Ascending aorta (tissue), 2 donors: ENCODE measurements at regions of chr12 and their contacts with region 1.

Region 1: DNA sequence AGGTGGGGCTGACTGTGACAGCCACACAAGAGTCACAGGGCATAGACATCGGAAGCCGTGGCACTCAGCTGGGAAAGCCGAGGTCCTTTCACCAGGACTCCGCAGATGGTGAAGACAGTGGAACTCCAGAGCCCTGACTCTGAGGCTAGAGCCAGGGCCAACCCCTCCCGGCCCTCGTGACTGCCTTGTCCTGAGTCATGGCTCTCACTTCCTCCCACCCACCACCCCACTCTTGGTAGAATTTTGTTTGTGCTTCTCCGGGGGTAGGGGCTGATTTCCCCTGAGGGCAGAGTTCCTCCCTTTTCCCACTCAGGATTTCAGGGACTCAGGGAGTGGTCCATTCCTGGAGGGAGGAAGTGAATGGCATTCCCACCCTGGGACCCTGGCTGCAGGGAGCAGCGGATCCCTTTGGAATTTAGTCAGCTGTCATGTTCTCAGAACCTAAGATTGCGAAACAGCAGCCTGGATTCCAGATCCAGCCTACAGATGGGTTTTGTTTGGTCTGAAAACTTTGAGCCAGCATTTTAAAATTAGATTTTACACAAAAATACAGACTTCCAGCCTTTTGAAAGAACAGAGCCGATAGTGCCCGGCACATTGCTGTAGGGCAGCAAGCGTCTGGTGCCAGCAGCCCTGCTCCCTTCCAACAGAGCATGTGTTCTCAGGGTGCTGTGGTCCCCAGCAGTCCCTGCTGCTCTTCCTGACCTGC is 50.7 kb downstream of the TPCN1 start:
- DNase-seq: peak; percentile 67 to 93
- H3K4me3 ChIP-seq: peak overlapping the region in 1 of 2 donors; percentile 43
- H3K27ac ChIP-seq: peak overlapping the region; percentile 76 to 78
- H3K4me1 ChIP-seq: peaks cover 19 to 27% of the 10 kb centered on the region in 2 donors
- H3K27me3 ChIP-seq: no peaks in the 10 kb centered on the region
- CTCF ChIP-seq: no peak

Region 2: GRCh38 chr12:112924986-112925385 is 347.0 kb before region 1 on chr12:
- intact Hi-C with region 1: no loop called
- DNase-seq: no peak
- H3K4me3 ChIP-seq: no peak overlapping the region
- H3K27ac ChIP-seq: no peak overlapping the region
- H3K4me1 ChIP-seq: no peaks in the 10 kb centered on the region
- H3K27me3 ChIP-seq: no peaks in the 10 kb centered on the region
- CTCF ChIP-seq: no peak

Region 3: DNA sequence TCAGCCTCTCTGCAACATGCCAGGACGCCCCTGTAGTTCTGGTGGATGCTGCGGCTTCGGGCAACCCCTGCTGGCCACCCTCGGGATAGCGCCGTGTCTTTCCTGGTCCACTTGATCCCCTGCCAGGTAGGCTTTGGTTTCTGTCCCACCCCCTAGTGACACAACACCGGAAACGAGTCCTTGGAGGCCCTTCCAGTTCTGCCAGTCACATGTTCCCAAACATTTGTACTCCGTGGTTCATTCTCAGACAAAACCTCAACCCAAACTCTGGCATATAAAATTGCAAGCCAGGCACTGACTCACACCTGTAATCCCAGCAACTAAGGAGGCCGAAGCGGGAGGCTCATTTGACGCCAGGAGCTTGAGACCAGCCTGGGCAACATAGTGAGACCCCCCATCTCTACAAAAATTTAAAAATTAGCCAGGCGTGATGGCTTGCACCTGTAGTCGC is 173.5 kb before region 1 on chr12:
- intact Hi-C with region 1: loop called (anchors 10 kb)
- DNase-seq: peak in 1 of 2 donors; percentile 91
- H3K4me3 ChIP-seq: no peak overlapping the region
- H3K27ac ChIP-seq: no peak overlapping the region
- H3K4me1 ChIP-seq: no peaks in the 10 kb centered on the region
- H3K27me3 ChIP-seq: peaks cover 3% of the 10 kb centered on the region
- CTCF ChIP-seq: peak; percentile 70 to 72 (median 72)

Region 4: DNA sequence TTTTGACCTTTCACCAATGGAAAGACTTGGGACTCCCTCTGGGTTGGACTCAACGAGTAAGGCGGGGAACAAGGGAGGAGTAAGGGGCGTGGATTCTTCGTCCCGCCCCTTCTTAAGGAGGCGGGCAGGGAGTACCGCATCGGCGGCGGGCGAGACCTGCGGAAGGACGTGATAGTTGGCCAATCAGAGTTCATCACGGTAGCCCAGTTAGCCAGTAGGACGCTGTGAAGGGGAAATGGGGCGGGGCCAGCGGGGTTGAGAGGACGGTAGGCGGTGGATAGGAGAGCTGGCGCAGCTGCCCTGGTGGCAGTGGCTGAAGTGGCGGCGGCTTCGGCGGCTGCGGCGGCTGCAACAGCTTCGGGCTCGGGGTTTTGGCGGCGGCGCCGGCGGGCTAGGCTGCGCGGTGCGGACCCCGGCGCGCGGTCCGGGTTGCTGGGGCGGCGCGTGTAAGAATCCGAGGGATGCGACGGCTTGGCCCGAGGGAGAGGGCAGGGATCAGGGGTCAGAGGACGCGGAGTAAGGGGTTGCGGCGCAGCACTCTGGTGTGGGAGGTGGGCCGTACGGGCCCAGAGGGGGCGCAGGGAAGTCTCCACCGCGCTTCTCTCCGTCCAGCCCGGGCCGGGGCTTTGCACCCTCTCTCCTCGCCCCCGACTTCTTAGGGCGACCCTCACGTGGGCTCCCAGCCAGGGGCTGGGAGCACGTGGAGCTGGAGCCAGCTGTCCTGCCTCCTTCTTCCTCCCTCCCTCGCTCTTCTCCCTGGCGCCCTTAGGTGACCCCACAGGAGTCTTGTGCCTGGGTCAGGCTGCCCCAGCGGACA is 50.6 kb before region 1 on chr12 and contains the start of gene TPCN1:
- intact Hi-C with region 1: loop called (anchors 2 kb)
- DNase-seq: peak; percentile 99 to 100
- H3K4me3 ChIP-seq: peak within 1 kb of the TSS; percentile 84 to 91
- H3K27ac ChIP-seq: peak within 1 kb of the TSS; percentile 82 to 94
- H3K4me1 ChIP-seq: peaks cover 18 to 33% of the 10 kb centered on the region in 2 donors
- H3K27me3 ChIP-seq: no peaks in the 10 kb centered on the region
- CTCF ChIP-seq: peak in 1 of 3 experiments; percentile 9
- total RNA-seq, gene TPCN1: 56.3 TPM

Region 5: DNA sequence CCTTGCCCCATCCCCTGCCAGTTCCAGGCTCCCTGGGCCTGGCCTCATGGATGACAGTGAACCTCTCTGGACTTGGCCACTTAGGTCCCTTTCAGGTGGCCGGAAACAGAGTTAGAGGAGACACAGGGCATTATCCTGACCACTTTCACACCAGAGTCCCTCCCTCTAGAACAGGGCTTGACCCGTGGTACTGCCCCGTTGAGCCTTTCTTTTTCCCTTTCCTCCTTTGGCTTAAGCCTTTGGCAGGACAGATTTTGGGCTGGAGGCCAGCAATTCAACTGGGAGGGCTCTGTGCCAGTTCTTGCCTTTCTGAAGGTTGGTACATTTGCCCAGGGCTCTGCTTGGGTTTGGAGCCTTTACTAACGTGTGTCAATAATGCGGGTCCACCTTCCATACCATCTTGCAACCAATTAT is 28.0 kb before region 1 on chr12:
- intact Hi-C with region 1: loop called (anchors 1 kb)
- DNase-seq: peak in 1 of 2 donors; percentile 91
- H3K4me3 ChIP-seq: peak overlapping the region in 1 of 2 donors; percentile 34
- H3K27ac ChIP-seq: peak overlapping the region; percentile 86 to 94
- H3K4me1 ChIP-seq: peaks cover 48 to 78% of the 10 kb centered on the region in 2 donors
- H3K27me3 ChIP-seq: no peaks in the 10 kb centered on the region
- CTCF ChIP-seq: no peak

Region 6: DNA sequence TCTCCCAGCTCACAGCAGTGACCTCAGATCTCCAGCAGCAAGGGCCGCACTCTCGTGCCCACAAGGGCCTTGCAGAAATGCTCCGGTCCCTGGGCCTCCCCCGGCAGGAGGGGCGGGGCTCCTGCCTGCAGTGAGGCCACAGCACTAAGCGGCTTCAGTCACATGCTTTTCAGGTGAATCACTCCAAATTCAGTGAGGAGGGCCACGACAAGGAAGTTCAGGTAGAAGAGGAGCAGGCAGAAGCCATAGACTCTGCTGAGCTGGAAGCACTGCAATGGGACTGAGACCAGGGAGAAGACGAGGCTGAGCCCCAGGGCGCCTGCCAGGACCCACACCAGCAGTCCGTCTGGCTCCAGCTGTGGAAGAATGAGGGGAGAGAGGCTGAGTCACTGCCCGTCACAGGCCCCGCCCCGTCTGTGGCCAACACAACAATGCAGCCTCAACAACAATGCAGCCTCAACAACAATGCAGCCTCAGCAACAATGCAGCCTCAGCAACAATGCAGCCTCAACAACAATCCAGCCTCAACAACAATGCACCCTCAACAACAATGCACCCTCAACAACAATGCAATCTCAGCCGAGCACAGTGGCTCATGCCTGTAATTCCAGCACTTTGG is 27.7 kb after region 1 on chr12:
- intact Hi-C with region 1: loop called (anchors 1 kb)
- DNase-seq: peak; percentile 42 to 84
- H3K4me3 ChIP-seq: peak overlapping the region in 1 of 2 donors; percentile 33
- H3K27ac ChIP-seq: peak overlapping the region; percentile 73 to 95
- H3K4me1 ChIP-seq: peaks cover 14 to 30% of the 10 kb centered on the region in 2 donors
- H3K27me3 ChIP-seq: no peaks in the 10 kb centered on the region
- CTCF ChIP-seq: no peak